ENCODE measurements at regions of chr7 and their contacts with region 1.

Region 1: DNA sequence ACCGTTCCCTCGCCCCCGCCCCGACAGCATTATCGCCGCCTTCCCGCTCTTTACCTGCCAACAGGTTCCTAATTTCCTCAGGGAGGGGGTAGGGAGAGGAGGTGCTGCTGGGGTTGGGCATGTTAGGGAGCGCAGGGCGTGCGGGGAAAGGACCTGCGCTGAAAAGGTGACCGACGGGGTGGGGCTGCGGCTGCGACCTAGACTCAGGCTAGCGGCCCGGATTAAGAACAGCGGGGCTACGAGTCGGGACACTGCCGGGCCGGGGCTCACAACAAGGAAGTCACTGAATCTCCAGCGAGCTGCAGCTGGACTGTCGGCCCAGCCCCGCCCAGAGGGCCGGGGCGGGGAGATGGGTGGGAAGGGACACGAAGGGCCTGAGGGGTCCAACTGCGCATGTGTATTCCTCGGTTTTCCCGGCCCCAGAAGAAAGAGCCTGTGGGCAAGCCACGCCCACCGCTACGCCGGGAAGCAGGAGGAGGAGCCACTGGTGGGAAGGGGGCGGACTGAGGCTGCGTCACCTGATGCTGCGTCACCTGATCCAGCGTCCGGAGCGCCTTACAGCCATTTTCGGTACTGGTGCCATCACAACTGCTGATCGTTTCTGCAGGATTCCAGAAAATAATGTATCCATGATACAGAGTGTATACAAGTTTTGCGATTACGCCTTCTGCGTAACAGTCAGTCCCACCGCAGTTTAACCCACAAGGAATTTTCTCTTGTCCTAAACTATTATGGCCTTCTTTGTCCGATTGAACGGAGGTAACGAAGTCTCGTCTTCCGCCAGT is at the start of gene SKAP2:
- DNase-seq: peak; percentile 97
- H3K4me3 ChIP-seq: peak within 1 kb of the TSS; percentile 7 to 63 (median 57)
- H3K27ac ChIP-seq: peak within 1 kb of the TSS; percentile 56 to 82 (median 77)
- H3K4me1 ChIP-seq: peaks cover 4 to 5% of the 10 kb centered on the region in 2 donors
- H3K27me3 ChIP-seq: no peaks in the 10 kb centered on the region
- CTCF ChIP-seq: no peak
- POLR2A ChIP-seq: peak; percentile 53 to 88
- total RNA-seq, gene SKAP2: 8.2 to 26.1 (median 11.8) TPM

Region 2: GRCh38 chr7:26574476-26574875 is 290.0 kb before region 1 on chr7:
- intact Hi-C with region 1: no loop called
- DNase-seq: no peak
- H3K4me3 ChIP-seq: no peak overlapping the region
- H3K27ac ChIP-seq: no peak overlapping the region
- H3K4me1 ChIP-seq: no peaks in the 10 kb centered on the region
- H3K27me3 ChIP-seq: no peaks in the 10 kb centered on the region
- CTCF ChIP-seq: no peak
- POLR2A ChIP-seq: no peak

Region 3: GRCh38 chr7:26760501-26760900 is 104.0 kb before region 1 on chr7:
- intact Hi-C with region 1: no loop called
- DNase-seq: no peak
- H3K4me3 ChIP-seq: no peak overlapping the region
- H3K27ac ChIP-seq: no peak overlapping the region
- H3K4me1 ChIP-seq: no peaks in the 10 kb centered on the region
- H3K27me3 ChIP-seq: no peaks in the 10 kb centered on the region
- CTCF ChIP-seq: no peak
- POLR2A ChIP-seq: no peak

Region 4: DNA sequence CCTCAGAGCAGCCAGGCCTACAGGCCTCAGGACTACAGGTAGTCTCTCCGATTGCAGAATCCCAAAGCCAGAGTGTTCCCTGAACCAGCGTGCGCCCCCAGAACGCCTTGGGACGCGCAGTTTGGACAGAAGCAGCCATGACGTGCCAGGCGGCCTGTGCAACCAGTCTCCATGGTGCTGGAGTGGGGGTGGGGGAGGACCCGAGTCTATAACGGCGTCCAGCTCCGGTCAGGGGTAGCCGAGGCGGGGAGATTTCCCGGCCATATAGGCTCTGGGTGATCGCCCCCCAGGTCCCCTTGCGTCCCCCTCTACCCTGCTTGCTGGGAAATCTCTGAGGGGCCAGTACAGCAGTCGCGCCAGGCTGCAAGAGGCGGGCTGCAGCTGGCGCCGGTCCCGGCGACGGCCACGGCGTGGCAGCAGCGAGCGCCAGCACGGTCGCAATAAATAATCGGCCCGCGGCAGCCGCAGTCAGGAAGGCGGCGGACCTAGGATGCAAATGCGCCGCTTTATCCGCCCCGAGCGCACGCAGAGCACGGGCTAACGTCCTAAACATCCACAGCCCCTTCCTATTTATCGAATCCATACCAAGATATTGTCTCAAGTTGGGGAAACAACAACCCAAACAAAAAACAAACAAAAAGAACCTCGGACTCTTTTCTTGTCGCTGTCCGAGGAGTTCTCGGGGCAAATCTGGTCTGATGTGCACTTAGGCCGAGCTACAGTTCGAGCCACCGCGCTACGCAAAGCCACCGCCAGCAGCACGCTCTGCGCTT is 286.3 kb after region 1 on chr7:
- intact Hi-C with region 1: loop called (anchors 5 kb)
- DNase-seq: peak; percentile 63 to 64
- H3K4me3 ChIP-seq: peak overlapping the region in 1 of 3 donors; percentile 23
- H3K27ac ChIP-seq: no peak overlapping the region
- H3K4me1 ChIP-seq: peaks cover 21 to 32% of the 10 kb centered on the region in 2 donors
- H3K27me3 ChIP-seq: peaks cover 91% of the 10 kb centered on the region
- CTCF ChIP-seq: peak; percentile 40 to 90 (median 64)
- POLR2A ChIP-seq: peak in 1 of 2 donors; percentile 13

Measured in thyroid gland (tissue), 4 donors.